ENCODE measurements at regions of chr4 and their contacts with region 1.

Region 1: GRCh38 chr4:37686373-37687193 is at the start of gene RELL1:
- DNase-seq: peak; percentile 95
- ATAC-seq: peak; percentile 86
- H3K4me3 Mint-ChIP-seq: peak within 1 kb of the TSS; percentile 97
- H3K27ac Mint-ChIP-seq: peak within 1 kb of the TSS; percentile 80
- H3K4me1 Mint-ChIP-seq: peaks cover 41% of the 10 kb centered on the region
- H3K27me3 Mint-ChIP-seq: peaks cover 8% of the 10 kb centered on the region
- CTCF ChIP-seq: no peak
- total RNA-seq, gene RELL1: 0.71 and 1.0 TPM in 2 replicates

Region 2: GRCh38 chr4:37603070-37603468 is 83.5 kb before region 1 on chr4:
- CTCF ChIA-PET with region 1: interaction called, 4 read pairs
- POLR2A ChIA-PET with region 1: no interaction called
- intact Hi-C with region 1: loop called (anchors 1 kb)
- DNase-seq: peak; percentile 59
- ATAC-seq: peak; percentile 84
- H3K4me3 Mint-ChIP-seq: no peak overlapping the region
- H3K27ac Mint-ChIP-seq: no peak overlapping the region
- H3K4me1 Mint-ChIP-seq: peaks cover 3% of the 10 kb centered on the region
- H3K27me3 Mint-ChIP-seq: peaks cover 2% of the 10 kb centered on the region
- CTCF ChIP-seq: peak; percentile 95

Region 3: DNA sequence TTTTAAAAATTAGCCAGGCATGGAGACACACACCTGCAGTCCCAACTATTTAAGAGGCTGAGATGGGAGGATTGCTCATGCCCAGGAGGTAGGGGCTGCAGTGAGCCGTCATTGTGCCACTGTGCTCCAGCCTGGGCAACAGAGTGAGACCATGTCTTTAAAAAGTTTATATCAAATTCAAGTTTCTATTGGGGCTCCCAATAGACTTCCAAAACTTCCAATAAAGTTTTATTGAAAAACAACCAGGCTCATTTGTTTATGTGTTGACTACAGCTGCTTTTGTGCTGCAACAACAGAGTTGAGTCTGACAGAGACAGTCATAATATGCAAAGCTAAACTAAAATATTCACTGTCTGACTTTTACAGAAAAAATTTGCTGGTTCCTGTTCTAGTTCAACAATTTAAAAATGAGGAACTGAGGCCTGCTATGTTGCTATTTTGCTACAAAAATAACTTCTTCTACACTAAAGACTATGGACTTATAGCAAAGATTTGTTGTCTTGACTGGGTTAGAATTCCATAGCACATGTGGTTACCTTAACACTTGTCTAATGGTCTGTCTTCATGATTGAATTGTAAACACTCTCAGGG is 62.9 kb after region 1 on chr4:
- CTCF ChIA-PET with region 1: no interaction called
- POLR2A ChIA-PET with region 1: no interaction called
- intact Hi-C with region 1: loop called (anchors 2 kb)
- DNase-seq: no peak
- ATAC-seq: peak; percentile 77
- H3K4me3 Mint-ChIP-seq: peak overlapping the region; percentile 28
- H3K27ac Mint-ChIP-seq: peak overlapping the region; percentile 38
- H3K4me1 Mint-ChIP-seq: peaks cover 40% of the 10 kb centered on the region
- H3K27me3 Mint-ChIP-seq: no peaks in the 10 kb centered on the region
- CTCF ChIP-seq: no peak

Region 4: DNA sequence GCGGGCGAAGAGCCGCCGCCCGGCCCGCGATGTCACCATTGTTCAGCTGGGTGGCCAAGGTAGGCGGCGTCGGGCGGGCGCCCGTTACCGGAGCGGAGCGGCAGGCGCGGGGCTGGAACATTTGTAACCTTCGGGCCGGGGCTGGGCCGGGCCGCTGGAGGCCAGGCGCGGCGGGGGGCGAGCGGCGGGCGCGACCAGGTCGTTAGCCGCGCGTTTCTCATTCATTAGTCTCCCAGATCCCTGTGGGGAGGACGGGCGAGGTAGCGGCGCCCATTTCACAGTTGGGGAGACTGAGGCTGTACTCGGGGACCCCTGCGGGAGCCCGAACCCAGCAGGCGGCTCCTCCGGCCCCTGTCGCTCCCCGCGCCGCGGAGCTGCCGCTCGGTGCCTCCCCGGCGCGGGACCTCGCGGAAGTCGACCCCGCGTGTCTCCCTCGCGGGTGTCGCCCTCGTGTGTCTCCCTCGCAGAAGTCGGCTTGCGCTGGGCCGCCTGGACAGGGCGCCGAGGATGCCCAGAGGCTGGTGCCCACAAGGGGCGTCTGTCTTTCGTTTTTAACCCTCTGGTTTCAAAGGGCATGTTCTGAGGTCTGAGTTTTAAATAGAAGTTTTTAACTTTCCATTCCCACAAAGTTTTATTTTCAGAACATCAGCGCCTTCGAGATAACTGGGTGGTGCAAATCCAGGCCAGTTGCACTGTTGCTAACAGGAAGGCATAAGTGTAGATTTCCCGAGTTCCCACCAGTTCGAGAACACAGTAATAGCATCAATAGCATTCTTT is 291.1 kb after region 1 on chr4:
- CTCF ChIA-PET with region 1: no interaction called
- POLR2A ChIA-PET with region 1: no interaction called
- intact Hi-C with region 1: loop called (anchors 2 kb)
- DNase-seq: peak; percentile 62
- ATAC-seq: peak; percentile 73
- H3K4me3 Mint-ChIP-seq: peak overlapping the region; percentile 86
- H3K27ac Mint-ChIP-seq: peak overlapping the region; percentile 82
- H3K4me1 Mint-ChIP-seq: peaks cover 57% of the 10 kb centered on the region
- H3K27me3 Mint-ChIP-seq: no peaks in the 10 kb centered on the region
- CTCF ChIP-seq: no peak

Region 5: DNA sequence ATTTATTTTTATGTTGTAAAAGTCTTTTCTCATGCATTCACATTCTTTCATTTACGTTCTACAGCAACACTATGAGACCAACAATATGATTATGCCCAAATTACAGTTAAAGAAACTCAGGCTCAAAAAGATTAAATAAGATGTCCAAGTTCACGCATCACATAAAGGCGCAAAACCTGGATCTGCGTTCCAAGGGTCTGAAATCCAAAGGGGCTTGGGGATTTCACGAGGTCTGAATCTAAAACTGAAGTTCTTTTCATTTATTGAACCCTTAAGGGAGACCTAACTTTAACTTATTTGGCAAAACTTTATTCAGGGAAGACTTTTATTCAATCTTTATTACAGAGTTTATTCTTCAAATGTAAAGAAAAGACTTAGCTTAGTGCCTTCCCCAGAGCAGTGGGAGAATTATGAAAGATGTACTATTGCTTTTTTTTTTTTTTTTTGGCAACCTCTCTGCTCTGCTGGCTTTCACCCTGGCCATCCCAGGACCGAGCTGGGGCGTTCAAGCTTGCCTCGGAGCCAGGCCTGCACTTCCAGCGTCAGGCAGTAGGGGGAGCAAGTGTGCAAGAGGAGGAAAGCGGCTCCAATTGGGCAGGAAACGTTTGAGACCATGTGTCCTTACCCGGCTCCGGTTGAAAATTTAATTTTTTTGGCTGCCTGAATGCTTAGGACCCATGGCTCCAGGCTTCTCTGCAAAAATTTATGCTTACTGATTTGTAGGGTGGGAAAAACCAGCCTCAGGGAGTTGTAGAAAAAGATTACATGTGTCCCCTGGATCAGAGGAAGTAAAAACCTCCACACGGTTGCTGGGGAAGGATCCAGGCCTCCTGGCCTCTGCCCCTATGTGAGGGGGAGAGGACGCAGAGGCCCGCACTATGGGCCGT is 633.1 kb after region 1 on chr4:
- CTCF ChIA-PET with region 1: no interaction called
- POLR2A ChIA-PET with region 1: no interaction called
- intact Hi-C with region 1: loop called (anchors 5 kb)
- DNase-seq: peak; percentile 84
- ATAC-seq: peak; percentile 77
- H3K4me3 Mint-ChIP-seq: peak overlapping the region; percentile 78
- H3K27ac Mint-ChIP-seq: peak overlapping the region; percentile 88
- H3K4me1 Mint-ChIP-seq: peaks cover 28% of the 10 kb centered on the region
- H3K27me3 Mint-ChIP-seq: no peaks in the 10 kb centered on the region
- CTCF ChIP-seq: peak; percentile 72